ENCODE measurements at regions of chr15 and their contacts with region 1.

Region 1: GRCh38 chr15:89893696-89894455 is at the start of gene AP3S2:
- DNase-seq: peak; percentile 93
- ATAC-seq: peak; percentile 91
- H3K4me3 ChIP-seq: peak within 1 kb of the TSS; percentile 75 to 95 (median 89)
- H3K4me3 Mint-ChIP-seq: peak within 1 kb of the TSS; percentile 98
- H3K27ac ChIP-seq: peak within 1 kb of the TSS; percentile 62 to 80
- H3K27ac Mint-ChIP-seq: peak within 1 kb of the TSS; percentile 95
- H3K4me1 ChIP-seq: peaks cover 7 to 14% of the 10 kb centered on the region in 2 donors
- H3K4me1 Mint-ChIP-seq: peaks cover 33% of the 10 kb centered on the region
- H3K27me3 ChIP-seq: no peaks in the 10 kb centered on the region
- H3K27me3 Mint-ChIP-seq: no peaks in the 10 kb centered on the region
- CTCF ChIP-seq: no peak
- total RNA-seq, gene AP3S2: 32.3 and 43.1 TPM in 2 replicates

Region 2: GRCh38 chr15:89740137-89740536 is 153.7 kb before region 1 on chr15:
- CTCF ChIA-PET with region 1: interaction called, 9 read pairs
- POLR2A ChIA-PET with region 1: no interaction called
- intact Hi-C with region 1: loop called (anchors 1 kb)
- DNase-seq: peak; percentile 82
- ATAC-seq: peak; percentile 87
- H3K4me3 ChIP-seq: no peak overlapping the region
- H3K4me3 Mint-ChIP-seq: peak overlapping the region; percentile 41
- H3K27ac ChIP-seq: no peak overlapping the region
- H3K27ac Mint-ChIP-seq: no peak overlapping the region
- H3K4me1 ChIP-seq: peaks cover 0 to 2% of the 10 kb centered on the region in 2 donors
- H3K4me1 Mint-ChIP-seq: peaks cover 3% of the 10 kb centered on the region
- H3K27me3 ChIP-seq: peaks cover 0 to 4% (median 0%) of the 10 kb centered on the region in 4 experiments
- H3K27me3 Mint-ChIP-seq: peaks cover 25% of the 10 kb centered on the region
- CTCF ChIP-seq: peak; percentile 96

Region 3: GRCh38 chr15:89912674-89913396 is 19.0 kb after region 1 on chr15 and contains the start of gene ARPIN:
- CTCF ChIA-PET with region 1: interaction called, 7 read pairs
- POLR2A ChIA-PET with region 1: no interaction called
- intact Hi-C with region 1: loop called (anchors 2 kb)
- DNase-seq: peak; percentile 32
- ATAC-seq: no peak
- H3K4me3 ChIP-seq: peak within 1 kb of the TSS in 4 of 5 experiments; percentile 13 to 63 (median 49)
- H3K4me3 Mint-ChIP-seq: peak within 1 kb of the TSS; percentile 71
- H3K27ac ChIP-seq: no peak within 1 kb of the TSS
- H3K27ac Mint-ChIP-seq: no peak within 1 kb of the TSS
- H3K4me1 ChIP-seq: peaks cover 12 to 13% of the 10 kb centered on the region in 2 donors
- H3K4me1 Mint-ChIP-seq: peaks cover 16% of the 10 kb centered on the region
- H3K27me3 ChIP-seq: peaks cover 0 to 19% (median 17%) of the 10 kb centered on the region in 4 experiments
- H3K27me3 Mint-ChIP-seq: peaks cover 46% of the 10 kb centered on the region
- CTCF ChIP-seq: no peak
- total RNA-seq, gene ARPIN: 0.10 TPM in 1 of 2 replicates, not detected in the other

Region 4: DNA sequence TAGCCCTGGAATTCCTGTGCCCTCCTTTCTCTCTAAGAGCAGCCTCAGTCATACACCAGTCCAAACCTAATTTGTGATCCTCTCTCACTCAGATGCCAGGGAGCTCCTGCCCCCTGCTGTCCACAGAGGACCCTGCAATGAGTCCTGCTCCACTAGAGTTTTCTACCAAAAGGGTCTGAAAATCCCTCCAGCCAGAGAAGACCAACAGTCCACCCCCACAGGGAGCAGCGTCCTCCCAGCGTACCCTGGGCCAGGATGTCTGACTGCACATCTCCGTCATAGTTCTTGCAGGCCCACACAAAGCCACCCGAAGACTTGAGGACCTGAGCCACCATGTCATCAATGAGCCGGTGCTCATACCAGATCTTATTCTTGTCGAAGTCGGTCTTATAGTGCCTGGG is 193.0 kb after region 1 on chr15:
- CTCF ChIA-PET with region 1: interaction called, 101 read pairs
- POLR2A ChIA-PET with region 1: interaction called, 5 read pairs
- intact Hi-C with region 1: loop called (anchors 1 kb)
- DNase-seq: peak; percentile 63
- ATAC-seq: peak; percentile 73
- H3K4me3 ChIP-seq: no peak overlapping the region
- H3K4me3 Mint-ChIP-seq: no peak overlapping the region
- H3K27ac ChIP-seq: no peak overlapping the region
- H3K27ac Mint-ChIP-seq: peak overlapping the region; percentile 46
- H3K4me1 ChIP-seq: no peaks in the 10 kb centered on the region
- H3K4me1 Mint-ChIP-seq: peaks cover 14% of the 10 kb centered on the region
- H3K27me3 ChIP-seq: no peaks in the 10 kb centered on the region
- H3K27me3 Mint-ChIP-seq: no peaks in the 10 kb centered on the region
- CTCF ChIP-seq: peak; percentile 71

Region 5: GRCh38 chr15:90101969-90102890 is 208.4 kb after region 1 on chr15 and contains the start of gene IDH2:
- CTCF ChIA-PET with region 1: interaction called, 13 read pairs
- POLR2A ChIA-PET with region 1: interaction called, 4 read pairs
- intact Hi-C with region 1: no loop called
- DNase-seq: peak; percentile 84
- ATAC-seq: peak; percentile 88
- H3K4me3 ChIP-seq: peak within 1 kb of the TSS; percentile 39 to 76 (median 73)
- H3K4me3 Mint-ChIP-seq: peak within 1 kb of the TSS; percentile 90
- H3K27ac ChIP-seq: peak within 1 kb of the TSS; percentile 53 to 81
- H3K27ac Mint-ChIP-seq: peak within 1 kb of the TSS; percentile 97
- H3K4me1 ChIP-seq: peaks cover 43 to 47% of the 10 kb centered on the region in 2 donors
- H3K4me1 Mint-ChIP-seq: peaks cover 45% of the 10 kb centered on the region
- H3K27me3 ChIP-seq: peaks cover 0 to 5% (median 1%) of the 10 kb centered on the region in 4 experiments
- H3K27me3 Mint-ChIP-seq: peaks cover 6% of the 10 kb centered on the region
- CTCF ChIP-seq: no peak
- total RNA-seq, gene IDH2: 30.7 and 33.3 TPM in 2 replicates